RWPE1 (cell line): ENCODE measurements at regions of chr17 and their contacts with region 1.

Region 1: DNA sequence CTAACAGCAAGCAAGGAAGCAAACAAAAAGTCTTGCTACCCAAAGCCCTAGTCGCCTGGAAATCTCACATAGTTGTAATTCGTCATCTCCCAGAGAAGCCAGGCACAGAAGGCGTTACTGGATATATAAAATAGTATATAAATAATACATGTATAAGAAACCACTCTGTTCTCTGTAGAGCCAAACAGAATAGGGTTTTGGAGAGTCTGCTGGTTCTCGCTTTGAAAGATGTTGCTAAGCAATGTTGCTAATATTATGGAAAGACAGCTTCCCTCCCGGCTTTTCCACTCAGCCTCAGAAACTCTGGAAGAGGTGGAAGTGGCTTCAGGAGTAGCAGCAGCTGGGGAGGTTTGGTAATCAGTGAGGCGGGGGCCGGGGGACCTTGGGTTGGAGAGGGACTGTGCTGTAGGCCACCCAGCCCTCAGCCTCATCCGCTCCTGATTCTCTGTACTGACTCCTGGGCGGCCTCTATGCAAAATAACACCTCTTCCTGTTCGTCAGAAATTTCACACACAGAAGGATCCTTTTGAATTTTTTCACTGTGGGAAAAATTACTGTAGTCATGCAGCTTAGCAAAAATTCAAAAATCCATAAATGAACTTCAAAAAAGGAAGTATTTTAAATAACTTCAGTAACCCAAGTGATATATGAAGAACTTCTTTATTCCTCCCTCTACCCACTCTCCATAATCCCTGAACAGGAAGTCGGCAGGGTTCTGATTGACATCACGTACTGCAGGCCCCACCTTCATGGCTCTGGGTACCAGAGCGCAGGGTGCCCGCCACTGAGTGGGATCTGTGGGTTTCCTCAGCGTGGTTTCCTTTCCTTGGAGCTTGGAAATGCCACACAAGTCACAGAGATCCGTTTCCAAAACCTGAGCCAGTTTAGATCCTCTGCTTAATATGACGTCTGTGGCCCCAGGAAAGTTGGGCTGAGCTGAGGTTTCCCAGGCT is 51.4 kb downstream of the RAP1GAP2 start:
- DNase-seq: no peak
- H3K27ac ChIP-seq: no peak overlapping the region
- CTCF ChIP-seq: no peak

Region 2: DNA sequence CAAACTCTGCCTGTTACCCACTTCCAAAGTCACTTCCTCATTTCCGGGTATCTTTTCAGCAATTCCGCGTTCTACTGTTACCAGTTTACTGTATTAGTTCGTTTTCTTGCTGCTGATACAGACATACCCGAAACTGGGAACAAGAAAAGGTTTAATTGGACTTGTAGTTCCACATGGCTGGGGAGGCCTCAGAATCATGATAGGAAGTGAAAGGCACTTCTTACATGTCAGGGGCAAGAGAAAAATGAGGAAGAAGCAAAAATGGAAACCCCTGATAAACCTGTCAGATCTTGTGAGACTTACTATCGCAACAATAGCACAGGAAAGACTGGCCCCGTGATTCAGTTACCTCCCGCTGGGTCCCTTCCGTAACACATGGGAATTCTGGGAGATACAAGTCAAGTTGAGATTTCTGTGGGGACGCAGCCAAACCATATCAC is 223.3 kb before region 1 on chr17:
- CTCF ChIA-PET with region 1: no interaction called
- POLR2A ChIA-PET with region 1: no interaction called
- DNase-seq: no peak
- H3K27ac ChIP-seq: no peak overlapping the region
- CTCF ChIP-seq: no peak

Region 3: GRCh38 chr17:2929881-2930533 is 82.3 kb after region 1 on chr17:
- CTCF ChIA-PET with region 1: interaction called, 26 read pairs
- POLR2A ChIA-PET with region 1: no interaction called
- DNase-seq: peak; percentile 53
- H3K27ac ChIP-seq: peak overlapping the region; percentile 98
- CTCF ChIP-seq: peak; percentile 71

Region 4: GRCh38 chr17:2965563-2966235 is 118.0 kb after region 1 on chr17:
- CTCF ChIA-PET with region 1: interaction called, 11 read pairs
- POLR2A ChIA-PET with region 1: no interaction called
- DNase-seq: peak; percentile 63
- H3K27ac ChIP-seq: peak overlapping the region; percentile 72
- CTCF ChIP-seq: no peak

Region 5: DNA sequence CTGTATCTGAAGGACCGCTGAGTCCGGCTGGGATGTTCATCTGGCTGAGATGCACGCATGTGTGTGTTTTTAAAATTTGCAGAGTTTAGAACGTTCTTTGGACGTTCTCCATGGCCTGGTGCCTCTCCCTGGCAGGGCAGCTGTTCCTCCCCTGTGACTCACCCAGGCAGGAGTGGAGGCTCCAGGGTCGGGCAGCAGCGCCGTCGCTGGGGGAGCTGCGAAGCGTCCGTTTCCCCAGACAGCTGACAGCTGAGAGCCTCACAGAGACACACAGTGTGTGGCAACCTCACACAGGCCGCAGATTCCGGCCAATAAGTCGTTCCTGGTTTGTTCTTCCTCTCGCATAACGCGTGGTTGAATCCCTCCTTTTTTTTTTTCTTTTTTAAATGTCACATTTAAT is 135.2 kb after region 1 on chr17:
- CTCF ChIA-PET with region 1: interaction called, 12 read pairs
- POLR2A ChIA-PET with region 1: no interaction called
- DNase-seq: peak; percentile 55
- H3K27ac ChIP-seq: peak overlapping the region; percentile 28; the same call in 1 of the 2 replicates
- CTCF ChIP-seq: no peak

Region 6: GRCh38 chr17:3004133-3004801 is 156.6 kb after region 1 on chr17:
- CTCF ChIA-PET with region 1: interaction called, 22 read pairs
- POLR2A ChIA-PET with region 1: no interaction called
- DNase-seq: peak; percentile 98
- H3K27ac ChIP-seq: peak overlapping the region; percentile 90
- CTCF ChIP-seq: no peak

Region 7: DNA sequence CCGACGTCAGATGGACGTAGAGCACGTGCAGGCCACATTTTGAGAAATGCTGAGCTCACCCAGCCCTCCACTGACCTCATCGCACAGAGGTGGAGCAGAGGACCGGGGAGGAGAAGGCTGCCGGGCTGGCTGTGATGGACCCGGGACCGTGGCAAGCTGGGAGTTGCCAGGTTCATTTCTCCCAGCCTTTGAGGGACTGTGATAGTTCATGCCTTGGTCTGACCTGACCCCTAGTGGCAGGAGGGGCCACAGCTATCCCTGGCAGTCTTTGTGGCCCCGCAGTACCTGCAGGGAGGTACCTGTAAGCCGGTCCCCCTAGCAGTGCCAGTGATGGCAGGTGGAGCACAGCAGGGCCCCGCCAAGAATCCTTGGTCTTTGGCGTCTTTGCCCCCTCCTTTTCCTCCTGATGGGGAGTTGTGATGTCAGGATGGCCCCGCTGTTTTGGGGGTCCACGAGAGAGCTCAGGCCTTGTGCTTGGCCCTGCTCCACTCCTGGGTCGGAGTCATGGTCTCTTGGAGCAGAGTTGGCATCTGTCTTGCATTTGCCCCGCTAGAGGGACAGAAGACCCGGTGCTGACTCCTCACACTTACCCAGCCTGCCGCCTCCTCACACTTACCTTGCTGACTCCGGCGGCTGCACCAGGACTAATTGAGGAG is 165.4 kb after region 1 on chr17:
- CTCF ChIA-PET with region 1: interaction called, 38 read pairs
- POLR2A ChIA-PET with region 1: no interaction called
- DNase-seq: peak; percentile 55
- H3K27ac ChIP-seq: no peak overlapping the region
- CTCF ChIP-seq: peak; percentile 73